ENCODE measurements at regions of chr7 and their contacts with region 1.

Region 1: DNA sequence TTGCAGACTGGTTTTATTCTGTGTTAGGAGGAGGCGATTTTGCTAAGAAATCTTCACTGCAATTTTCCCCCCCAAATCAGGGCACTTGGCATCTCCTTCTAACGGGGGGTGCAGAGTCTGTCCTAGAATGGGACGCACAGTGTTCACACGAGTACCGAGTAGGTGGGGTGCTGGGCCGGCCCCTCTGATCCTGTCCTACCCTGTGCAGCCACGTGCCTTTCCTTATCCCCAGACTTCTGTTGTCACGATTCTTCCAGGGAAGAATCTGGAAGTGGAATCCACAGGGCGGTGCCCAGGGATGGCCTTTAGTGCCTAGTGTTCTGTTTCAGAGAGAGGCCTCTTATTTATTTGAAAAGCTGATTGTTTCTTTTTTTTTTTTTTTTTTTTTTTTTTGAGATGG is 16.4 kb downstream of the CUX1 start:
- DNase-seq: no peak
- ATAC-seq: no peak
- H3K4me3 ChIP-seq: no peak overlapping the region
- H3K4me3 Mint-ChIP-seq: no peak overlapping the region
- H3K27ac ChIP-seq: peak overlapping the region in 1 of 2 donors; percentile 36
- H3K27ac Mint-ChIP-seq: no peak overlapping the region
- H3K4me1 ChIP-seq: peaks cover 6 to 15% of the 10 kb centered on the region in 2 donors
- H3K4me1 Mint-ChIP-seq: peaks cover 39% of the 10 kb centered on the region
- H3K27me3 ChIP-seq: no peaks in the 10 kb centered on the region
- H3K27me3 Mint-ChIP-seq: no peaks in the 10 kb centered on the region
- CTCF ChIP-seq: no peak

Region 2: DNA sequence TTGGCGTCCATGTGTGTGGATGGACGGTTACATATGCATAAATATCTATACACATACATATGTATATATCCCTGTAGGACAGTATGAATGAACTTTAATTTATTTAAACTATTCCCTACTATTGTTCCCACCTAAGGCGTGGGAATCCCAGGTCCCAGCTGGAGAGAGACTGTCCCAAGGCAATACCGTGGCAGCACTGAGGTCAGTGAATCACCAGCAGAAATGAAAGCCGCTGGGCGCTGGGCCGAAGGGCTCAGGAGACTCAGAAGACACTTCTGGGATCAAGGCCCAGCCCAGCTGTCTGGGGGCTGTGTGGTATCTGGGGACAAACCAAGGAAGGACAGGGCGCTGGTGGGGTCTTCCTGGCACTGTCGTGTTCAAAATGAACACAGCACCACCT is 155.1 kb before region 1 on chr7:
- CTCF ChIA-PET with region 1: no interaction called
- POLR2A ChIA-PET with region 1: interaction called, 10 read pairs
- intact Hi-C with region 1: no loop called
- DNase-seq: no peak
- ATAC-seq: no peak
- H3K4me3 ChIP-seq: no peak overlapping the region
- H3K4me3 Mint-ChIP-seq: no peak overlapping the region
- H3K27ac ChIP-seq: no peak overlapping the region
- H3K27ac Mint-ChIP-seq: no peak overlapping the region
- H3K4me1 ChIP-seq: no peaks in the 10 kb centered on the region
- H3K4me1 Mint-ChIP-seq: no peaks in the 10 kb centered on the region
- H3K27me3 ChIP-seq: no peaks in the 10 kb centered on the region
- H3K27me3 Mint-ChIP-seq: no peaks in the 10 kb centered on the region
- CTCF ChIP-seq: no peak